ENCODE measurements at regions of chr14 and their contacts with region 1.

Region 1: DNA sequence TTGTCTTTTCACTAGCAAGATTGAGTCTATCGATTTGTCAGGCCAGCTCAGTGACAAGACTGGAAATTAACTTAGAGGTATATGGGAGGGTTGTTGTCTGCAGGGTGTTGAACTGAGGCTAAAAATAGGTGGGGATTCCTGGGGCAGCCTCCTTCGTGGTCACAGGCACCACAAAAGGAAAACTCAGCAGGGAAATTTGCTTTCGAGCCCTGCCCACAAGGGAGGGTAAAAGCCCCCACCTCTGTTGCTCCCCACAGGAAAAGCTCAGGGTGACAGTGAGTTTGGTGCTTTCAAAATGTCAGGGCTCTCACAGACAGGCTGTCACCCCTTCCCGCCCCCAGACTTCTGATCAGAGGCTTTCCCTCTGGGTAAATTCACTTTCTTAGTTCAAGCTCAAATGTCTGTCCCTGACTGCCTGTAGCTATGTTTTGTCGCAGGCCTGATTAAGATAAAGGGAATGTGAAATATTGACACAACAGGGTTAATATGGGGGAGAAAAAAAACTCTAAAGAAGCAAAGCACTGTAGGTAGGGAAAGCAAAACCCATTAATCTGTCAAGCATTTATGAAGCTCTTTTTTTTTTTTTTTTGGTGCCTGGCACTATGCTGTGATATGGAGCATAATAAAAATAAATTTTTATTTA is 11.7 kb upstream of the NFKBIA start:
- DNase-seq: peak in 6 of 9 donors; percentile 18 to 80 (median 30)
- ATAC-seq: peak; percentile 67
- H3K4me3 ChIP-seq: no peak overlapping the region
- H3K4me3 Mint-ChIP-seq: peak overlapping the region; percentile 46 to 81 (median 72)
- H3K27ac ChIP-seq: peak overlapping the region; percentile 73
- H3K27ac Mint-ChIP-seq: peak overlapping the region; percentile 76 to 95 (median 92)
- H3K4me1 ChIP-seq: peaks cover 31 to 32% of the 10 kb centered on the region in 2 donors
- H3K4me1 Mint-ChIP-seq: peaks cover 29 to 48% (median 45%) of the 10 kb centered on the region in 7 donors
- H3K27me3 ChIP-seq: no peaks in the 10 kb centered on the region
- H3K27me3 Mint-ChIP-seq: peaks cover 0 to 7% (median 0%) of the 10 kb centered on the region in 5 donors

Region 2: GRCh38 chr14:34403643-34404042 is 1012.6 kb before region 1 on chr14:
- CTCF ChIA-PET with region 1: interaction called, 11 read pairs
- POLR2A ChIA-PET with region 1: no interaction called
- intact Hi-C with region 1: no loop called
- DNase-seq: no peak
- ATAC-seq: no peak
- H3K4me3 ChIP-seq: no peak overlapping the region
- H3K4me3 Mint-ChIP-seq: no peak overlapping the region
- H3K27ac ChIP-seq: no peak overlapping the region
- H3K27ac Mint-ChIP-seq: no peak overlapping the region
- H3K4me1 ChIP-seq: no peaks in the 10 kb centered on the region
- H3K4me1 Mint-ChIP-seq: peaks cover 0 to 6% (median 0%) of the 10 kb centered on the region in 7 donors
- H3K27me3 ChIP-seq: no peaks in the 10 kb centered on the region
- H3K27me3 Mint-ChIP-seq: peaks cover 0 to 13% (median 8%) of the 10 kb centered on the region in 5 donors

Region 3: DNA sequence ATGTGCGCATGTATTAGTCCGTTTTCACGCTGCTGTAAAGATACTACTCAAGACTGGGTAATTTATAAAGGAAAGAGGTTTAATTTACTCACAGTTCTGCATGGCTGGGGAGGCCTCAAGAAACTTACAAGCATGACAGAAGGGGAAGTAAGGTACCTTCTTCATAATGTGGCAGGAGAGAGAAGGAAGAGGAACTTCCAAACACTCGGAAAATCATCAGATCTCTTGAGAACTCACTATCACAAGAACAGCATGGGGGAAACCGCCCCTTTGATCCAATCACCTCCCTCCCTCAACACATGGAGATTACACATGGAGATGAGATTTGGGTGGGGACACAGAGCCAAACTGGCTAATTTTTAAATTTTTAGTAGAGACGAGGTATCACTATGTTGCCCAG is 744.5 kb before region 1 on chr14:
- CTCF ChIA-PET with region 1: interaction called, 5 read pairs
- POLR2A ChIA-PET with region 1: interaction called, 3 read pairs
- intact Hi-C with region 1: loop called (anchors 2 kb)
- DNase-seq: no peak
- ATAC-seq: no peak
- H3K4me3 ChIP-seq: no peak overlapping the region
- H3K4me3 Mint-ChIP-seq: no peak overlapping the region
- H3K27ac ChIP-seq: no peak overlapping the region
- H3K27ac Mint-ChIP-seq: no peak overlapping the region
- H3K4me1 ChIP-seq: no peaks in the 10 kb centered on the region
- H3K4me1 Mint-ChIP-seq: peaks cover 0 to 1% (median 0%) of the 10 kb centered on the region in 7 donors
- H3K27me3 ChIP-seq: no peaks in the 10 kb centered on the region
- H3K27me3 Mint-ChIP-seq: peaks cover 0 to 2% (median 0%) of the 10 kb centered on the region in 5 donors

Region 4: DNA sequence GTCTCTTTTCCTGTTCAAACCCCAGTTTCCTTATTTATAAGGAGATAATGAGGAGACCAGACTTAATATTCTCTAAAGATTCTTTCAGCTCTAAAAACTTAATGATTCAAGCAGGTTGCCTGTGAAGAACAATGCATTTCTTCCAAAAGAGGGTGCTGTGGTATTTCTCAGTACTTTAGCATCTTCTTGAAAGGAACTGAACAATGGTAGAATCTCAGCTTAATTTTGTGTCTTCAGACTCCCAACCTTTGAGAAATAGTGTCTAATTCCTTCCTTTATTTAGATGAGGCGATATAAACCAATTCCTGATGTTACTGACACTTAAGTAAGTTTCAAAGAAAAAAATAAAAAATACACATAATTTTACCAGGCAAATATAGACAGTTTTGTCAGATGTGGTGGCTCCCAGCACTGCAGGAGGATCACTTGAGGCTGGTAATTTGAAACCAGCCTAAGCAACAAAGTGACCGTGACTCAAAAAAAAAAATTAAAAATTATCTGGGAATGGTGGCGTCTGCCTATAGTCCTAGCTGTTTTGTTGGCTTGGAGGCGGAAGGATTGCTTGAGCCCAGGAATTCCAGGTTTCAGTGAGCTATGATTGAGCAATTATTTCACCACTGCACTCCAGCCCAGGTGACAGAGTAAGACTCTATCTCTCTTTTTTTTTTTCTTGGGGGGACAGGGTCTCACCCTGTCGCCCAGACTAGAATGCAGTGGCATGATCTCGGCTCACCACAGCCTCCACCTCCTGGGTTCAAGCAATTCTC is 200.9 kb before region 1 on chr14:
- CTCF ChIA-PET with region 1: interaction called, 7 read pairs
- POLR2A ChIA-PET with region 1: no interaction called
- intact Hi-C with region 1: loop called in 1 of 2 experiments (anchors 1 kb)
- DNase-seq: peak in 3 of 9 donors; percentile 11 to 19 (median 14)
- ATAC-seq: no peak
- H3K4me3 ChIP-seq: no peak overlapping the region
- H3K4me3 Mint-ChIP-seq: no peak overlapping the region
- H3K27ac ChIP-seq: no peak overlapping the region
- H3K27ac Mint-ChIP-seq: peak overlapping the region in 3 of 9 donors; percentile 31 to 48 (median 43)
- H3K4me1 ChIP-seq: no peaks in the 10 kb centered on the region
- H3K4me1 Mint-ChIP-seq: peaks cover 6 to 29% (median 12%) of the 10 kb centered on the region in 7 donors
- H3K27me3 ChIP-seq: no peaks in the 10 kb centered on the region
- H3K27me3 Mint-ChIP-seq: no peaks in the 10 kb centered on the region

Region 5: DNA sequence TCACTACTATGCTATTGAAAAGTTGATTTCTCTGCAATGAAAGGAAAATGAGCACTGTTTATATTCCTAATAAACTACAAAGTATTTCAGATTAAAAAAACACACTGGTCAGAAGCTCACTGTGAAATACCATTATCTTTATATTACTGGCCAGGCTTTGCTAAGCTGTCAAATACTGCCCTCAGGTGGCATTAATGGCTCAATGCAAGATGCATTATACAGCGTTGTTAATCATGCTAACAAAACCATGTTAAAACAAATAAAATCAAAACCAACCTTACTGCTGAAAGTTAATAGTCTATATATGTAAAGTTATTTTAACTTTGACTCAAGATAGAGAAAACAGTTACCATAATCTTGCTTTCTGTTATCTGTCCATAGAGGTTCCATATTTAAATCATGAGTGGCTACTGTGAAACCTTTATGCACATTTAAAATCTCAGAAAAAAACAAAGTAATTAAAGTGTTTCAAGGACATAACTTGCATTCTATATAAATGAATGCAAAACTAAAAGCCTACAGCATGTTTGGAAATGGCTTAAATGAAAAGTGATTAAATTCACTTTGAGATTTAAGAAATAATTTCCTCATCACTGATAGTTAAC is 271.2 kb after region 1 on chr14:
- CTCF ChIA-PET with region 1: no interaction called
- POLR2A ChIA-PET with region 1: no interaction called
- intact Hi-C with region 1: loop called in 1 of 2 experiments (anchors 5 kb)
- DNase-seq: peak in 5 of 9 donors; percentile 2 to 20 (median 10)
- ATAC-seq: peak; percentile 74
- H3K4me3 ChIP-seq: no peak overlapping the region
- H3K4me3 Mint-ChIP-seq: no peak overlapping the region
- H3K27ac ChIP-seq: no peak overlapping the region
- H3K27ac Mint-ChIP-seq: no peak overlapping the region
- H3K4me1 ChIP-seq: no peaks in the 10 kb centered on the region
- H3K4me1 Mint-ChIP-seq: peaks cover 0 to 15% (median 0%) of the 10 kb centered on the region in 7 donors
- H3K27me3 ChIP-seq: no peaks in the 10 kb centered on the region
- H3K27me3 Mint-ChIP-seq: no peaks in the 10 kb centered on the region